Dendritic cell treated with granulocyte-macrophage colony-stimulating factor and Interleukin-4, amounts not matched to agents 40 ng/mL and 50 ng/mL, for 4 days (primary cell): ENCODE measurements at regions of chr15 and their contacts with region 1.

Region 1: GRCh38 chr15:56869573-56869972 is 48.9 kb upstream of the TCF12 start:
- H3K4me3 Mint-ChIP-seq: no peak overlapping the region
- H3K27ac Mint-ChIP-seq: no peak overlapping the region
- H3K4me1 Mint-ChIP-seq: peaks cover 5% of the 10 kb centered on the region
- H3K27me3 Mint-ChIP-seq: no peaks in the 10 kb centered on the region

Region 2: GRCh38 chr15:56496635-56497034 is 372.9 kb before region 1 on chr15:
- intact Hi-C with region 1: loop called (anchors 1 kb)
- H3K4me3 Mint-ChIP-seq: no peak overlapping the region
- H3K27ac Mint-ChIP-seq: no peak overlapping the region
- H3K4me1 Mint-ChIP-seq: peaks cover 4% of the 10 kb centered on the region
- H3K27me3 Mint-ChIP-seq: peaks cover 2% of the 10 kb centered on the region

Region 3: GRCh38 chr15:56719774-56720555 is 149.6 kb before region 1 on chr15:
- intact Hi-C with region 1: loop called (anchors 10 kb)
- H3K4me3 Mint-ChIP-seq: no peak overlapping the region
- H3K27ac Mint-ChIP-seq: no peak overlapping the region
- H3K4me1 Mint-ChIP-seq: peaks cover 42% of the 10 kb centered on the region
- H3K27me3 Mint-ChIP-seq: no peaks in the 10 kb centered on the region

Region 4: GRCh38 chr15:56821721-56822425 is 47.7 kb before region 1 on chr15:
- intact Hi-C with region 1: loop called (anchors 2 kb)
- H3K4me3 Mint-ChIP-seq: no peak overlapping the region
- H3K27ac Mint-ChIP-seq: no peak overlapping the region
- H3K4me1 Mint-ChIP-seq: peaks cover 28% of the 10 kb centered on the region
- H3K27me3 Mint-ChIP-seq: no peaks in the 10 kb centered on the region